Calu3 (cell line): ENCODE measurements at regions of chr5 and their contacts with region 1.

Region 1: DNA sequence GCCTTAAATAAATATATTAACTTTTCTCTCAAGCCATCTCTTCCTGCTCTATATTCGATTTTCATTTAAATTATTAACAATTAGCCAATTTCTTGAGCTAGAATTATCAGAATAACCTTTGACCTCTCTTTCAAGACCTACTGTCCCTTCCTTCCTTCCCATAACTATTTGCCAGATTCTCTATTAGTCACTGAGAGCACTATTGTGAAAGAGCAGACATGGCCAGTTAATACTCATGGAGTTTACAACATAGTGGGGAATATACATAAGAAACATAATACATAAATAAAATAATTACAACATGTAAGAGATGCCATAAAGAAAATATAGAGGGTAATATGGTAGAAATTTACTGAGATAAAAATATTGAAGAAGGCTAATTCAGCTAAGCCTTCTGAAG is 72.1 kb upstream of the CHD1 start:
- DNase-seq: no peak
- H3K4me3 Mint-ChIP-seq: peak overlapping the region; percentile 24
- H3K27ac Mint-ChIP-seq: peak overlapping the region; percentile 69
- H3K4me1 Mint-ChIP-seq: peaks cover 48% of the 10 kb centered on the region
- H3K27me3 Mint-ChIP-seq: no peaks in the 10 kb centered on the region
- CTCF ChIP-seq: no peak

Region 2: GRCh38 chr5:99025298-99026045 is 24.6 kb after region 1 on chr5:
- CTCF ChIA-PET with region 1: interaction called, 3 read pairs
- intact Hi-C with region 1: loop called (anchors 1 kb)
- DNase-seq: peak; percentile 56
- H3K4me3 Mint-ChIP-seq: no peak overlapping the region
- H3K27ac Mint-ChIP-seq: peak overlapping the region; percentile 88
- H3K4me1 Mint-ChIP-seq: peaks cover 64% of the 10 kb centered on the region
- H3K27me3 Mint-ChIP-seq: no peaks in the 10 kb centered on the region
- CTCF ChIP-seq: no peak